ENCODE measurements at regions of chr17 and their contacts with region 1.

Region 1: GRCh38 chr17:72287586-72287985 is 166.8 kb downstream of the SOX9 start:
- DNase-seq: peak in 1 of 10 donors; percentile 67
- H3K4me3 ChIP-seq: no peak overlapping the region
- H3K27ac ChIP-seq: no peak overlapping the region
- H3K27me3 ChIP-seq: no peaks in the 10 kb centered on the region
- CTCF ChIP-seq: no peak

Region 2: DNA sequence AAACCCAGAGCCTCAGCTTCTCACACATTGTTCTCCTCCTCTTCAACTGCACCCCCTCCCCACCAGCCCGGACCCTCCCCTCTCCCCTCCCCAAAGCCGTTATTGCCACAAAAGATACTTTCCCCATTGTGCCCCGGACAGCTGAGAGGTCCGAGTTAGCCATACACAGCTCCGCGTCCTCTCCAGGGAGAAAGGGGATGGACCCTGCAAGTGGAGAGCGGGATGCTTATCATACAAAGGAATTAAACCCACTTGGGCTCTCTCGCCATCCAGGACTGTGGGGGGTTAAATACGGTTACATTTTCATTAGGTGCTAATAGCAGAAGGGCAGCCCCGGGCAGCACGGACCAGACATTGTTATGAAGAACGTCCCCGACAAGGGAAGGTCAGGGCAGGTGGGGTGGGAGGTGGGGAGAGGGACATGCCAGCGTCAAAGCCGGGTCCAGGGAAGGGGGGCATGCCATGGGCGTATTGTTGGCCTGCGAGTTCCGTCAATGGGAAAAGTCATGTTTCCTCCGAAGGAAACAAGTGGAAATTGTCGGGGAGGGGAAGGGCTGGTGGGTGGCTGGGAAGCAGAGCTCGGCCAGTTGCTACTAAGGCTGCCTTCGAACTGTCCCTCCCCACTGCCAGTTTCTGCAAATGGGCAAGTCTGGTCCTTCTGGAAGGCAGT is 67.6 kb before region 1 on chr17:
- intact Hi-C with region 1: loop called in 1 of 2 experiments (anchors 10 kb)
- DNase-seq: no peak
- H3K4me3 ChIP-seq: peak overlapping the region in 56 of 59 donors; percentile 2 to 62 (median 36)
- H3K27ac ChIP-seq: no peak overlapping the region
- H3K27me3 ChIP-seq: peaks cover 0 to 35% (median 15%) of the 10 kb centered on the region in 45 donors
- CTCF ChIP-seq: no peak